GM10248 (cell line): ENCODE measurements at regions of chr1 and their contacts with region 1.

Region 1: GRCh38 chr1:108559215-108560186 is at the start of gene EEIG2:
- DNase-seq: peak; percentile 91
- CTCF ChIP-seq: peak; percentile 86

Region 2: GRCh38 chr1:108521990-108522393 is 37.5 kb before region 1 on chr1:
- CTCF ChIA-PET with region 1: interaction called, 179 read pairs
- POLR2A ChIA-PET with region 1: no interaction called
- DNase-seq: no peak
- CTCF ChIP-seq: no peak

Region 3: GRCh38 chr1:108541861-108542260 is 17.6 kb before region 1 on chr1:
- CTCF ChIA-PET with region 1: interaction called, 12 read pairs
- POLR2A ChIA-PET with region 1: no interaction called
- DNase-seq: no peak
- CTCF ChIP-seq: no peak

Region 4: GRCh38 chr1:108584348-108584856 is 24.9 kb after region 1 on chr1:
- CTCF ChIA-PET with region 1: interaction called, 24 read pairs
- POLR2A ChIA-PET with region 1: no interaction called
- DNase-seq: no peak
- CTCF ChIP-seq: no peak

Region 5: GRCh38 chr1:108643492-108644335 is 84.2 kb after region 1 on chr1:
- CTCF ChIA-PET with region 1: interaction called, 25 read pairs
- POLR2A ChIA-PET with region 1: no interaction called
- DNase-seq: peak; percentile 55
- CTCF ChIP-seq: peak; percentile 57

Region 6: GRCh38 chr1:108758796-108759195 is 199.3 kb after region 1 on chr1:
- CTCF ChIA-PET with region 1: no interaction called
- POLR2A ChIA-PET with region 1: no interaction called
- DNase-seq: no peak
- CTCF ChIP-seq: no peak